ENCODE measurements at regions of chr2 and their contacts with region 1.

Region 1: GRCh38 chr2:73736855-73737779 is at the start of gene TPRKB:
- DNase-seq: peak; percentile 96 to 97
- ATAC-seq: peak; percentile 99
- H3K4me3 ChIP-seq: peak within 1 kb of the TSS; percentile 74 to 89 (median 82)
- H3K27ac ChIP-seq: peak within 1 kb of the TSS; percentile 69 to 86 (median 78)
- H3K4me1 ChIP-seq: peaks cover 19 to 20% of the 10 kb centered on the region in 2 donors
- H3K27me3 ChIP-seq: no peaks in the 10 kb centered on the region
- CTCF ChIP-seq: no peak
- POLR2A ChIP-seq: peak; percentile 58 to 65
- total RNA-seq, gene TPRKB: 49.4 to 90.1 (median 55.9) TPM

Region 2: DNA sequence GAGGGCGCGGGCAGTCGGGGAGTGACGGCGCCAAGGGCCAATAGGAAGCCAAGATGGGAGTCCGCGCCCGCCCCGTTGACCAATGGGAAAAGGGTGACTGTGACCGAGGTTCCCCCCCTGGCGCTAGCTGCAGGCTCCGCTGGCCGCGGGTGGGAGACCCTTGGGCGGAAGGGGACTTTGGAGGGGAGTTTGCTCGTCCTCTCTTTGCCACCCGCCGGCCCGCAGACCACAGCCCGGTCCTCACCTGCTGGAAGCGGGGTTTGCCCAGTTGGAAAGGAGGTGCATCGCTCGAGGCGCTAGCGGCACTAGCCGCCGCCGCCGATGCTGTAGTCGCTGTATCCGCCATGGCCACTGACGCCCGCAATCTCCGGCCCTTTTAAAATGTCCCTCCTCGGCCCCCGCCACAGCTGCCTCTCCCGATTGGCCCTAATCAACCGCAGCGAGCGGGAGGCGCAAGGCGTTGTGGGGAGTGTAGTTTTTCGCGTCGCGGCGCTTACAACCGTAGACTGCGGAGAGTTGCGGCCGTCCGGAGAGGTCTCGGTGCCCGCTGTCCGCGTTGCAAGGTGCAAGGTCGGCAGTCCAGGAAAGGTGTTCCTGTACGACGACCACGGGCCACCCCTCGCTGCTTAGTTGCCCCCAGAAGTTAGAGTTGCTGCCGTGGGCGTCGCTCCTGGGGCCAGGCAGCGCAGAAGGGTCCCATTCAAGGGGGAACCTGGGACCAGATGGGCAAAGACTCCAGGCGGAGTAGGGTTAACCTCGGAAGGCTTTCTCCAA is 665.6 kb before region 1 on chr2 and contains the start of gene SFXN5:
- in situ Hi-C with region 1: no loop called
- intact Hi-C with region 1: loop called (anchors 10 kb)
- DNase-seq: peak; percentile 98
- ATAC-seq: peak; percentile 84 to 90
- H3K4me3 ChIP-seq: peak within 1 kb of the TSS; percentile 83 to 93 (median 92)
- H3K27ac ChIP-seq: peak within 1 kb of the TSS; percentile 87 to 97 (median 92)
- H3K4me1 ChIP-seq: peaks cover 19 to 48% of the 10 kb centered on the region in 2 donors
- H3K27me3 ChIP-seq: no peaks in the 10 kb centered on the region
- CTCF ChIP-seq: peak in 2 of 5 experiments; percentile 32 to 35
- POLR2A ChIP-seq: peak; percentile 24 to 59
- total RNA-seq, gene SFXN5: 6.8 to 22.7 (median 9.1) TPM

Region 3: GRCh38 chr2:73385595-73386341 is 351.3 kb before region 1 on chr2 and contains the start of gene ALMS1:
- in situ Hi-C with region 1: loop called in 1 of 4 experiments (anchors 25 kb)
- intact Hi-C with region 1: loop called (anchors 5 kb)
- DNase-seq: peak; percentile 68 to 84
- ATAC-seq: peak; percentile 91
- H3K4me3 ChIP-seq: peak within 1 kb of the TSS; percentile 81 to 97 (median 92)
- H3K27ac ChIP-seq: peak within 1 kb of the TSS; percentile 88 to 96 (median 91)
- H3K4me1 ChIP-seq: peaks cover 12 to 23% of the 10 kb centered on the region in 2 donors
- H3K27me3 ChIP-seq: no peaks in the 10 kb centered on the region
- CTCF ChIP-seq: peak in 3 of 5 experiments; percentile 13 to 53 (median 33)
- POLR2A ChIP-seq: peak in 1 of 2 donors; percentile 26
- total RNA-seq, gene ALMS1: 10.0 to 18.1 (median 13.9) TPM

Region 4: DNA sequence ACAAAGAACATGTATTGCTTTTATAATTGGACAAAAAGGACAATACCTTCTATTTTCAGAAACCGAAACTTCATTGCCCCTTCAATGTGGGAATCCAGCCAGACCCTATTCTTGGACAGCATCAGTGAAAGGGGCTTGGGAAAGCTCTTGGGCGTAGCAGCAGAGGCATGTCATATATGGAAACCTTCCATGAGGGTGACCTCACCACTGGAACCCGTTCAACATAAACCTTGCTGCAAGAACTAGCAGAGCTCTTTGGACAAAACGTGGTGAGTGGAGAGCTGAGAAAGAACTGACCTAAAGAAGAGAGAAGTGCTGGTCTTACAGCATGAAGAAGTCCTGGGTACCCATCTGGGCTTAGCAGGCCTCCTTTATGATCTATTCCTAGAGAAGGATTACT is 133.0 kb after region 1 on chr2:
- in situ Hi-C with region 1: no loop called
- intact Hi-C with region 1: no loop called
- DNase-seq: peak in 1 of 2 donors; percentile 26
- ATAC-seq: peak; percentile 42 to 46
- H3K4me3 ChIP-seq: no peak overlapping the region
- H3K27ac ChIP-seq: peak overlapping the region in 1 of 4 donors; percentile 21
- H3K4me1 ChIP-seq: no peaks in the 10 kb centered on the region
- H3K27me3 ChIP-seq: no peaks in the 10 kb centered on the region
- CTCF ChIP-seq: no peak
- POLR2A ChIP-seq: no peak

Region 5: GRCh38 chr2:73926493-73927338 is 189.6 kb after region 1 on chr2 and contains the start of gene DGUOK:
- in situ Hi-C with region 1: no loop called
- intact Hi-C with region 1: loop called (anchors 1 kb)
- DNase-seq: peak; percentile 96 to 97
- ATAC-seq: peak; percentile 100
- H3K4me3 ChIP-seq: peak within 1 kb of the TSS; percentile 69 to 91 (median 82)
- H3K27ac ChIP-seq: peak within 1 kb of the TSS; percentile 82 to 93 (median 91)
- H3K4me1 ChIP-seq: peaks cover 15 to 17% of the 10 kb centered on the region in 2 donors
- H3K27me3 ChIP-seq: peaks cover 0 to under 1% (median 0%) of the 10 kb centered on the region in 3 donors
- CTCF ChIP-seq: no peak
- POLR2A ChIP-seq: peak; percentile 82 to 90
- total RNA-seq, gene DGUOK: 10.2 to 25.2 (median 20.3) TPM

Region 6: DNA sequence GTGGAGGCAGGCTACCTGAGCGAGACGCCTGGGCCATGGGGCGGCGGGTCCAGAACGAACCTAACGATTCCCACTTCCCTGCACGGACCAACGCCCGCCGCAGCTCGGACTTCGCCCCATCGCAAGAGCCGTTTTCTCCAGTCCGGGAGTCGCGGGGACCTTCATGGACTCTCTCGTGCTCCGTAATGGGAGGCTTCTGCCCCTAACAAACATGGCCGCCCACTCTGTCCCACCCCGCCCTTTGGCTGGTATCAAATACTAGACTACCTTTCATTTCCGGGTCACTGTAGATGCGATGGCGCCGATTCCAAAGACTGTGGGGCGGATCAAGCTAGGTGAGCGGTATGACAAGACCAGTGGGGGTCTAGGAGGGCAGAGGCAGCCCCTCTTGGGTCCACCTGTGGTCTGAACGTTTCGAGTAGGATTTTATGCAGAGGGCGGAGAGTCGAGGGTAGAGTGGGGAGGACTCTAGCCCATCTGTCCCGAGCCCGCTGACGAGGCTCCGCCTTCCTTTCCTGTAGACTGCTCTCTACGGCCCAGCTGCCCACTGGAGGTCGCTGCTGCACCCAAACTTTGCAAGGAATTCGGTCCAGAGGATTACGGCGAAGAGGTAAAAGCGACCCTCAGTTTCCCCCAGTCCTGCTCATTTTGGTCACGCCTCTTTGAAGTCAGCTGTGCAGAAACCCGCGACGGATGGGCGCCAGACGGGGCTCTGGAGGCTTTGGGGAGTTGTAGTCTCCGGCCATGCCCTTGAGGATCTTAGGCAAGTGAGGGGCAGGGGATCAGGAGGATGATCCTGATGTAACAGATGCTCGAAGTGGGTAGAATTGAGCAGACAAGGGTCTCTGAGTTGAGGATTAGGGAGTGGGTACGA is 745.9 kb after region 1 on chr2 and contains the starts of genes CCDC142 and TTC31:
- in situ Hi-C with region 1: no loop called
- intact Hi-C with region 1: loop called (anchors 2 kb)
- DNase-seq: peak; percentile 96 to 97
- ATAC-seq: peak; percentile 99 to 100
- H3K4me3 ChIP-seq: peak within 1 kb of the TSS; percentile 82 to 97 (median 87)
- H3K27ac ChIP-seq: peak within 1 kb of the TSS; percentile 83 to 94 (median 88)
- H3K4me1 ChIP-seq: peaks cover 24 to 25% of the 10 kb centered on the region in 2 donors
- H3K27me3 ChIP-seq: no peaks in the 10 kb centered on the region
- CTCF ChIP-seq: peak; percentile 74 to 90 (median 85)
- POLR2A ChIP-seq: peak; percentile 25 to 45
- total RNA-seq, gene CCDC142: 5.5 to 7.3 (median 6.0) TPM
- total RNA-seq, gene TTC31: 6.1 to 9.6 (median 7.7) TPM